ENCODE measurements at regions of chr6 and their contacts with region 1.

Region 1: DNA sequence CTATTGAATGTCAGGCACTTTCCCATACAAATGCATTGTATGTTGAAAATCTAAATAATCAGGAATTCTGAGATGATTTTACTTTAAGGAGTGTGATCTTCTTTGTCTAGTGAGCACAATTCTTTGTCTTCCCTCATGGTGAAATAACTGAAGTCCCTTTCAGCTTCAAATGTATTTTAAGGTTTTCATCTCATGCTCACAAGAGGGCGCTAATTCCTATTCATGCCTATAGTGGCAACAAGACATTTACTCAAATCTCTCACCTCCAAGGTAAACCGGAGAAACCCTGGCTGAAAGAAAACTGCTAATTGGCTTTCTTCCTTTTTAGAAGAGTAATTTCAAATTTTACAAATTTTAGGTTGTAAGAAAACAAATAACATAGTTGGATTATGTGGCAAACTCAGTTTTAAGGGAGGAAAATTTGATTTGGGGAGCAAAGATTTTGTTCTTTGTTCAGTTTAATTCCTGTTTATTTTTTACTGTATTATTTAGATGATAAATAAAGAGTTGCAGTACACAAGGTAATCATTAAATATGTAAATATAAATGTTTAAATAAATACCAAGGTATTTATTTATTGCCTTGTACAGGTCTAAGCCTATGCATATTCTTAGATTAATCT is 69.1 kb downstream of the SLC35F1 start:
- DNase-seq: no peak
- H3K4me3 ChIP-seq: peak overlapping the region in 8 of 59 donors; percentile 3 to 37 (median 12)
- H3K27ac ChIP-seq: no peak overlapping the region
- H3K27me3 ChIP-seq: peaks cover 0 to 6% (median 0%) of the 10 kb centered on the region in 45 donors
- CTCF ChIP-seq: peak; percentile 56 to 83 (median 70)

Region 2: GRCh38 chr6:117290173-117290846 is 685.8 kb before region 1 on chr6:
- intact Hi-C with region 1: no loop called
- DNase-seq: no peak
- H3K4me3 ChIP-seq: no peak overlapping the region
- H3K27ac ChIP-seq: no peak overlapping the region
- H3K27me3 ChIP-seq: peaks cover 0 to 25% (median 0%) of the 10 kb centered on the region in 45 donors
- CTCF ChIP-seq: no peak

Region 3: GRCh38 chr6:117960877-117961276 is 15.3 kb before region 1 on chr6:
- intact Hi-C with region 1: no loop called
- DNase-seq: no peak
- H3K4me3 ChIP-seq: peak overlapping the region in 2 of 59 donors; percentile 9 to 11
- H3K27ac ChIP-seq: no peak overlapping the region
- H3K27me3 ChIP-seq: peaks cover 0 to 26% (median 0%) of the 10 kb centered on the region in 45 donors
- CTCF ChIP-seq: no peak

Region 4: DNA sequence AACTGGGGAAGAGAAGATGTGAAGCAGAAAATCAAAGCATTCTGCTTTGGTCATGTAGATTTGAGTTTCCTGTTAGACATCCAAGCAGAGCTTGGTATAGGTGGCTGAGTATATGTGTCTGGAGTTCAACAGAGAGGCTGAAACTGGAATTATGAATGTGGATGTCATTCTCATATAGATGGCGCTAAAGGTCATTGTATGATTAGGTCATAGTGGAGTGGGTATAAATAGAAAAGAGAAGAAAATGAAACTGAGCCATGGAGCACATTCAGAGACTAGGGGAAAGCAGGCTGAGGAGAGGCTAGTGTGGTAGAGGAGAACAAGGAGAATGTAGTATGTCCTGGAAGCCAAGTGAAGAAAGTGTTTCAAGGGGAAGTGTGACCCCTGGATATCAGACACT is 276.3 kb after region 1 on chr6:
- intact Hi-C with region 1: loop called in 1 of 2 experiments (anchors 10 kb)
- DNase-seq: no peak
- H3K4me3 ChIP-seq: no peak overlapping the region
- H3K27ac ChIP-seq: peak overlapping the region in 7 of 59 donors; percentile 3 to 38 (median 26)
- H3K27me3 ChIP-seq: peaks cover 0 to 16% (median 0%) of the 10 kb centered on the region in 45 donors
- CTCF ChIP-seq: no peak